ENCODE measurements at regions of chr22 and their contacts with region 1.

Region 1: GRCh38 chr22:22687638-22688500 is 43.5 kb downstream of the GGTLC2 start:
- DNase-seq: peak in 1 of 5 donors; percentile 29
- ATAC-seq: peak; percentile 32 to 85 (median 74)
- H3K4me3 ChIP-seq: no peak overlapping the region
- H3K27ac ChIP-seq: no peak overlapping the region
- H3K4me1 ChIP-seq: peaks cover 0 to 2% (median 0%) of the 10 kb centered on the region in 12 donors
- H3K27me3 ChIP-seq: no peaks in the 10 kb centered on the region
- CTCF ChIP-seq: peak; percentile 58 to 84 (median 70)
- POLR2A ChIP-seq: no peak

Region 2: GRCh38 chr22:22195265-22196017 is 492.4 kb before region 1 on chr22:
- intact Hi-C with region 1: loop called in 1 of 10 experiments (anchors 10 kb)
- DNase-seq: peak in 4 of 5 donors; percentile 24 to 59 (median 36)
- ATAC-seq: peak in 3 of 4 donors; percentile 41 to 65 (median 60)
- H3K4me3 ChIP-seq: no peak overlapping the region
- H3K27ac ChIP-seq: no peak overlapping the region
- H3K4me1 ChIP-seq: no peaks in the 10 kb centered on the region
- H3K27me3 ChIP-seq: peaks cover 0 to 46% (median 9%) of the 10 kb centered on the region in 9 donors
- CTCF ChIP-seq: peak; percentile 47 to 77 (median 62)
- POLR2A ChIP-seq: no peak

Region 3: GRCh38 chr22:22587577-22588188 is 100.2 kb before region 1 on chr22:
- intact Hi-C with region 1: loop called in 6 of 10 experiments (anchors 5 to 10 kb)
- DNase-seq: no peak
- ATAC-seq: no peak
- H3K4me3 ChIP-seq: no peak overlapping the region
- H3K27ac ChIP-seq: no peak overlapping the region
- H3K4me1 ChIP-seq: no peaks in the 10 kb centered on the region
- H3K27me3 ChIP-seq: peaks cover 0 to 17% (median 2%) of the 10 kb centered on the region in 9 donors
- CTCF ChIP-seq: no peak
- POLR2A ChIP-seq: no peak

Region 4: GRCh38 chr22:22593964-22594656 is 93.8 kb before region 1 on chr22:
- intact Hi-C with region 1: loop called in 6 of 10 experiments (anchors 5 to 10 kb)
- DNase-seq: peak in 2 of 5 donors; percentile 13 to 69
- ATAC-seq: peak in 1 of 4 donors; percentile 45
- H3K4me3 ChIP-seq: no peak overlapping the region
- H3K27ac ChIP-seq: no peak overlapping the region
- H3K4me1 ChIP-seq: no peaks in the 10 kb centered on the region
- H3K27me3 ChIP-seq: peaks cover 0 to 3% (median 0%) of the 10 kb centered on the region in 9 donors
- CTCF ChIP-seq: peak; percentile 36 to 63 (median 53)
- POLR2A ChIP-seq: no peak

Region 5: DNA sequence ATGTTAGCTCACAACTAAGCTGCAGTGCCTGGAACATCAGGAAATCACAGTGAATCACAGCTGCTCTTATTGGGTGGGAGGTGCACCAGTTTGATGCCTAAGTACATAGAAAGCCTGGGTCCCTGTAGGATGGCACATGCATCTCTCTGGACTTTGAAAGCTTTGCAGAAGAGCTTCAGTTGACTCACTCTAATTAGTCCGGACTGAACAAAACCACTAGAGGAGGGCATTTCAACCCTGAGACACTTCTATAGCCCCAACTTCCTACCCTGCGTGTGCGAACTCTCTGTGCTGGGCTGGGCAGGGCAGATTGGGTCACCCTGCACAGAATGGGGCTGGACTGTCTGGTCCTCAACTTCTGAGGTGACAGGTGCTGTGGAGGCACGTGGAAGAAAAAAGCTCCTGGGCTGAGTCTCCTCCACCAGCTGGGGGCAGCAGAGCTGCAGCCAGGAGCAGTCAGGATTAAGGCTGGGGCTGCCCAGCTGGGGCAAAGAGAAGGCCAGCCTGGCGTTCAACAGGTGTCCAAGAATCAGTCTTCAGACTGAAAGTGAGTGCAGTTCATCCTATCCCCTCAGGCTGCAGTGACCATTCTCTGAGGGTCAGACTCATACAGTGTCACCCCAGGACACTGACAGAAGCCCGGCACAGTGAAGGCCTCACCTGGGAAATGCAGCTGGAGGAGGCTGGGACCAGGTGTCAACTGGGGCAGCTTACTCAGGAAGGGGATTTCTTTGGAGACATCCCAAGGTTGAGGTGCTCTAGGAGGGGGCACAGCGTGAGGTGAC is 21.4 kb before region 1 on chr22:
- intact Hi-C with region 1: no loop called
- DNase-seq: no peak
- ATAC-seq: peak in 1 of 4 donors; percentile 29
- H3K4me3 ChIP-seq: no peak overlapping the region
- H3K27ac ChIP-seq: no peak overlapping the region
- H3K4me1 ChIP-seq: no peaks in the 10 kb centered on the region
- H3K27me3 ChIP-seq: peaks cover 0 to 8% (median 0%) of the 10 kb centered on the region in 9 donors
- CTCF ChIP-seq: peak in 11 of 12 donors; percentile 14 to 50 (median 42)
- POLR2A ChIP-seq: no peak

Region 6: GRCh38 chr22:22720201-22720723 is 32.4 kb after region 1 on chr22:
- intact Hi-C with region 1: no loop called
- DNase-seq: no peak
- ATAC-seq: peak in 3 of 4 donors; percentile 39 to 71 (median 66)
- H3K4me3 ChIP-seq: no peak overlapping the region
- H3K27ac ChIP-seq: peak overlapping the region in 2 of 12 donors; percentile 37 to 92
- H3K4me1 ChIP-seq: peaks cover 0 to 28% (median 0%) of the 10 kb centered on the region in 12 donors
- H3K27me3 ChIP-seq: peaks cover 0 to 31% (median 0%) of the 10 kb centered on the region in 9 donors
- CTCF ChIP-seq: peak in 10 of 12 donors; percentile 13 to 45 (median 30)
- POLR2A ChIP-seq: no peak

Region 7: DNA sequence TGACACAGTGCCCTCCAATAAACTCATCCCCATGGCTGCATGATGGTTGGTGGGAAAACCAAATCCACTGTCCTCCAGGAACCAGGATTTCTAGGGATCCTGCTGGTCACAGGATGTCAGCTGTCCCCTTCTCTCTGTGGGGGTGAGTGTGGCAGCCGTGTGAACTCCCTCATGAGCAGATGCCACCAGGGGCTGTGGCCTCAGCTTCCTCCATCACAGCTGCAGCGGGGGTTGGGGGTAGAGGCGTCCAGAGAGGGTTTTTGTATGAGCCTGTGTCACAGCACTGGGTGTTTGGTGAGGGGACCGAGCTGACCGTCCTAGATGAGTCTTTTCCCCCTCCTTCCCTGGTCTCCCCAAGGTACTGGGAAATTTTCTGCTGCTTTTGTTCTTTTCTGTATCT is 226.1 kb after region 1 on chr22:
- intact Hi-C with region 1: no loop called
- DNase-seq: peak in 1 of 5 donors; percentile 37
- ATAC-seq: no peak
- H3K4me3 ChIP-seq: no peak overlapping the region
- H3K27ac ChIP-seq: no peak overlapping the region
- H3K4me1 ChIP-seq: no peaks in the 10 kb centered on the region
- H3K27me3 ChIP-seq: peaks cover 0 to 7% (median 0%) of the 10 kb centered on the region in 9 donors
- CTCF ChIP-seq: no peak
- POLR2A ChIP-seq: no peak